Endothelial cell of umbilical vein (primary cell): ENCODE measurements at regions of chr5 and their contacts with region 1.

Region 1: DNA sequence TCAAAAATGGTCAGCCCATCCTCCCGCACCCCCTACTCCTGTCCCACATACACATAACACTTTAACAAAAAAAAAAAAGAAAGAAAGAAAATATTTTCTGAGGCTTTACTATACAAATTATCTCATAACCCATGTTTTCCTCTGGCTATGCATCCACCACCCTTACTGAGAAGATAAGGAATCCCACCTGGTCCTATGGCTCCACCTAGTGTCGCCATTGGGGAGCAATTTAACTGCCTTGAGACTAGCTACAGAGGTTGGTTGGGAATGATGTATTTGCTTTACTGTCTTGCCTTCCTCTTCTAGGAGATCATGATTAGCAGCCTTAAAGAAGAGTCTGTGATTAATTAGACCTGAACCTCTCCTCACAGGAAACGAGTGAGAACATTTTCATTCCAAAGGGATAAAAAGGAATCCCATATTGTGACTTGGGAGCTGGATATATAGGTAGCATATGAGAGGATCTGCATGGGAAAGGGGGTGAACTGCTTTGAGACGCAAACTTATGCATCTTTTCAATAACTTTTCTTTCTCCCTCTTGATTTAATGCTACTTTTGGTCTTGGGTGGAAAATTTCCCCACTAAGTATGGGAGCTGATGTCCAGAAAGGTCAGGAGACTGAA is 77.7 kb upstream of the SELENOP start:
- DNase-seq: peak; percentile 71
- H3K4me3 ChIP-seq: no peak overlapping the region
- H3K27ac ChIP-seq: no peak overlapping the region
- H3K4me1 ChIP-seq: no peaks in the 10 kb centered on the region
- H3K27me3 ChIP-seq: peaks cover 7 to 22% of the 10 kb centered on the region in 2 experiments
- CTCF ChIP-seq: peak; percentile 71 to 82
- POLR2A ChIP-seq: no peak

Region 2: DNA sequence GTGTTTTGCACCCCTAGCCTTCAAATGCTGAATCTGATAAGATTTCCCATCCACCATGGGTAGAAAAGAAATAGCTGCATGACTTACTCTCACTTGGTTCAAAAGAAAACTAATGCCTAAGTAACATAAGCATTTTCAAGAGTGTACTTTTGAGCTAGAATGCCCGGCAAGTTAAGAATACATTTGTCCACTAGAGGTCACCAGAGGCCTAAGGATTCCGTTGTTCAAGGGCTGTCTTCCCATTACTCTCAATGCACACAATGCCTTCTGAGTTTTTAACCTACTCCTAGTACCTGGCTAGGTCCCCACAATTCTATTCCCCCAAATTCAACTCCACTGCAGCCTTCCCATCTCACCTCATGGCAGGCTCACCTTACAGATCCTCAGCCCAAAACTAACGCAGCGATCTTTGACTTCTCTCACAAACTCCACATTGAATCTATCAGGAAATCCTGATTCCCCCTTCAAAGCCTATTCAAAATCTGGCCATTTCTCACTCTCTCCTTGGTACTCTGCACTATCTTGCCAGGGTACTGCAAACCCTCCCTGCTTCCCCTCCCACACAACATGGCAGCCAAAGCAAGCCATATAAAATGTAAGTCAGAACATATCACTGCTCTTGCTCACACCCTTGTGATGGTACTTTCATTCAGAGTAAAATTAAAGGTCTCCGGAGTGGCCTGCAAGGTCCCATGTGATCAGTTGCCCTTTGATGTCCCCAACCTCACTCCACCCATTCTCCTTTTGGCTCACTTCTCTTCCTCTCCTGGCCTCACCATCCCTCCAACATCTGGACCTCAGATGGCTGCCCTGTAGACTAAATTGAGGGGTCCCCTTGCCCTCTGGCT is 1032.6 kb before region 1 on chr5:
- CTCF ChIA-PET with region 1: interaction called, 24 read pairs
- POLR2A ChIA-PET with region 1: no interaction called
- dilution Hi-C with region 1: no loop called
- intact Hi-C with region 1: loop called (anchors 1 kb)
- DNase-seq: peak; percentile 77
- H3K4me3 ChIP-seq: no peak overlapping the region
- H3K27ac ChIP-seq: no peak overlapping the region
- H3K4me1 ChIP-seq: no peaks in the 10 kb centered on the region
- H3K27me3 ChIP-seq: no peaks in the 10 kb centered on the region
- CTCF ChIP-seq: peak; percentile 61
- POLR2A ChIP-seq: no peak

Region 3: DNA sequence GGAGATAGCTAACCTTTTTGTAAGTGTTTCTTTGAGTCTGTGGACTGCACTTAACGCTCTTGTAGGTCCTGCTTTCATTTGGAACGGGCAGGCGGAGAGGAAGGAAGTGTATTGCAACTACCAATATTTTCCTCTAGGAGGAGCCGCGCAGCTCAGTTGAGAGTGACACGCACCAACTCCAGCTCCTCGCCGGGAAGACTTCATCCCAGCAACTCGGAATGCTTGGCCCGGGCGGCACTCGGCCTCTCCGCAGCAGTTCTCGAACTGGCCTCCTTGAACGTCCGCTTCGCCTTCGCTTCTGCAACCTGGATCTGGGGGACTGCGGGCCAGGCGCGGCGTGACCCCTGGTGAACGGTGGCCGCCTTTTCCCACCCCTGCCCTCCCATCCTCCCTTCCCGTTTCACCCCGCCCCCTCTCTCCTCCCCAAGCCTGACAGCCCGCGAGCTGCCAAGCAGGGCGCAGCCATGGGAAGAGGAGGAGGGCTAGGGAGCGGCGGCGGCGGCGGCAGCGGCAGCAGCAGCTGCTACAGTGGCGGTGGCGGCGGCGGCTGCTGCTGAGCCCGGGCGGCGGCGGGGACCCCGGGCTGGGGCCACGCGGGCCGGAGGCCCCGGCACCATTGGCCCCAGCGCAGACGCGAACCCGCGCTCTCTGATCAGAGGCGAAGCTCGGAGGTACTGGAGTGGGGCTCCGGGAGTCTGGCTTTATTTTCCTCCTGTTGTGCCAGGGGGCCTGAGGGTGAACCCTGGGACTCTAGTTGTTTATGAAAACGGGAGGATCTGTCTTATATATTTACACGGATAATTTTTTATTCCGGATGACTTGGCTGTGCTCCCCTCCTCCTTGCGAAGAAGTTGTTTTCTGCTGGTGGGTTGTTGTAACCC is 465.9 kb before region 1 on chr5 and contains the start of gene GHR:
- CTCF ChIA-PET with region 1: interaction called, 17 read pairs
- POLR2A ChIA-PET with region 1: no interaction called
- dilution Hi-C with region 1: no loop called
- intact Hi-C with region 1: loop called (anchors 1 kb)
- DNase-seq: peak; percentile 89
- H3K4me3 ChIP-seq: peak within 1 kb of the TSS; percentile 8 to 39 (median 18)
- H3K27ac ChIP-seq: no peak within 1 kb of the TSS
- H3K4me1 ChIP-seq: peaks cover 4% of the 10 kb centered on the region
- H3K27me3 ChIP-seq: peaks cover 12% of the 10 kb centered on the region in 2 experiments
- CTCF ChIP-seq: peak; percentile 60 to 74
- POLR2A ChIP-seq: no peak
- total RNA-seq, gene GHR: 0.27 and 0.39 TPM in 2 replicates

Region 4: DNA sequence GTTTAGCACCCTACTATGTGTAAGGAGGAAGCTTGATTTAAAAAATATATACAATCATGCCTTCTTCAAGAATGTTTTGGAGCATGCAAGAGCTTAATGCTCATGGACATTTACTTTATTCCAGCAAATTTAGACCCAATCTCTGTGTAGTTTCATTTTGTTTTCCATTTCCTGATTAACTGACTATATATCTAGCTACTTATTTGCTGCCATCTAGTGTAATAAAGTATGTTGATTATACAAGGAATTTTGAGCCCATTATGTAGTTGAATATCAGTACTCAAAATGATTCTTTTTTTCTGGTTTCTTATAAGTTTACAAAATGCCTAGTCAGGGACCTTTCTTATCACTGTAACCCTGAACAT is 232.8 kb before region 1 on chr5:
- CTCF ChIA-PET with region 1: interaction called, 3 read pairs
- POLR2A ChIA-PET with region 1: no interaction called
- dilution Hi-C with region 1: no loop called
- intact Hi-C with region 1: loop called (anchors 5 kb)
- DNase-seq: peak; percentile 6
- H3K4me3 ChIP-seq: no peak overlapping the region
- H3K27ac ChIP-seq: no peak overlapping the region
- H3K4me1 ChIP-seq: no peaks in the 10 kb centered on the region
- H3K27me3 ChIP-seq: no peaks in the 10 kb centered on the region
- CTCF ChIP-seq: no peak
- POLR2A ChIP-seq: no peak

Region 5: DNA sequence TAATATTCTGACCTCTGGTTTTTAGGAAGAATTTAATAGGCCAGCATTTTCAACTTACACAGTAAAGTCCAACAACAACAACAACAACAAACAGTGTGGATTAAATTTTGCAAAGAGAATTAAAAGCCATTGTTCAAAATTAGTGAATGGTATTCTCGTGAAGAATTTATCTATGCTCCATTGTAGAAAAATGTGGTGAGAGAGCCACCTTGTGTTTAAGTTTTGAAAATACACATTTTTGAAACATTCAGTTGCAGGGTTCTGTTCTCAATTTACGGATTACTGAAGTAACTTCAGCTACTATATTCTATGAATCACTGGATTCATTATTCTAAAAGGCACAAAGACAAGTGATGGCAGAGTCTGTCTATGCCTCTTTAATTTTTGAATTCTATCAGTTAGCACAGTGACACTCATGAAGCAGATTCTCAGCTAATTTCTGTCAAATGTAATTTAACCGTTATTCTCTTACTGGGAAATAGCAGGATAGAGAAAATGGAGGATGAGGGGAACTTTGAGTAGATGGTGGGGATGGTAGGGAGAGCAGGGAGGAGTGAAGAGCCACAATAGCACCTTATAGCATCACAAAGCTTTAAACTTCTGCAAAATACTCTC is 121.8 kb before region 1 on chr5:
- CTCF ChIA-PET with region 1: interaction called, 16 read pairs
- POLR2A ChIA-PET with region 1: no interaction called
- dilution Hi-C with region 1: no loop called
- intact Hi-C with region 1: loop called (anchors 5 kb)
- DNase-seq: peak; percentile 39
- H3K4me3 ChIP-seq: no peak overlapping the region
- H3K27ac ChIP-seq: no peak overlapping the region
- H3K4me1 ChIP-seq: no peaks in the 10 kb centered on the region
- H3K27me3 ChIP-seq: no peaks in the 10 kb centered on the region
- CTCF ChIP-seq: peak; percentile 19 to 20
- POLR2A ChIP-seq: no peak

Region 6: DNA sequence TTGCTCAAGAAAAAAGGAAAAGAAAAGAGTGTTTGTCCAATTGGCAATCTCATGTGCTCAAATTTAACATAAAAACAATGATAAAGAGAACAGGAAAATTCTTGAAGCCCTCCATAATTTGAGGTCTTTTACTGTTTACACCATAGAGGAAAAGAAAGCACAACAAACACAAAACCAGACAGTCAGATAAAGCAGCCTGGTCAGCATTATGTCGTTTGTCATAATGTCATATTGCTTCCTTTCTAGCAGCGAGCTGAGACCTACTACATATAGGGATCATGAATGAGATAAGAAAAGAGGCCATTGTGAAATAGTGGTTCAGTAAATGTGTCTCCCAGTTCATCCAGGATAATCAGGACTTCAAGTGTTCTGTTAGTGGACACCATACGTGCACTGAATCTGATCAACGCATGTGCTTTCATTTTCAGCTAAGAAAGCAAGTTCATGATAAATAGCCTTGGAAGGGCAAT is 13.0 kb before region 1 on chr5:
- CTCF ChIA-PET with region 1: interaction called, 27 read pairs
- POLR2A ChIA-PET with region 1: no interaction called
- dilution Hi-C with region 1: no loop called
- intact Hi-C with region 1: no loop called
- DNase-seq: peak; percentile 52
- H3K4me3 ChIP-seq: no peak overlapping the region
- H3K27ac ChIP-seq: no peak overlapping the region
- H3K4me1 ChIP-seq: peaks cover 11% of the 10 kb centered on the region
- H3K27me3 ChIP-seq: no peaks in the 10 kb centered on the region
- CTCF ChIP-seq: no peak
- POLR2A ChIP-seq: no peak

Region 7: DNA sequence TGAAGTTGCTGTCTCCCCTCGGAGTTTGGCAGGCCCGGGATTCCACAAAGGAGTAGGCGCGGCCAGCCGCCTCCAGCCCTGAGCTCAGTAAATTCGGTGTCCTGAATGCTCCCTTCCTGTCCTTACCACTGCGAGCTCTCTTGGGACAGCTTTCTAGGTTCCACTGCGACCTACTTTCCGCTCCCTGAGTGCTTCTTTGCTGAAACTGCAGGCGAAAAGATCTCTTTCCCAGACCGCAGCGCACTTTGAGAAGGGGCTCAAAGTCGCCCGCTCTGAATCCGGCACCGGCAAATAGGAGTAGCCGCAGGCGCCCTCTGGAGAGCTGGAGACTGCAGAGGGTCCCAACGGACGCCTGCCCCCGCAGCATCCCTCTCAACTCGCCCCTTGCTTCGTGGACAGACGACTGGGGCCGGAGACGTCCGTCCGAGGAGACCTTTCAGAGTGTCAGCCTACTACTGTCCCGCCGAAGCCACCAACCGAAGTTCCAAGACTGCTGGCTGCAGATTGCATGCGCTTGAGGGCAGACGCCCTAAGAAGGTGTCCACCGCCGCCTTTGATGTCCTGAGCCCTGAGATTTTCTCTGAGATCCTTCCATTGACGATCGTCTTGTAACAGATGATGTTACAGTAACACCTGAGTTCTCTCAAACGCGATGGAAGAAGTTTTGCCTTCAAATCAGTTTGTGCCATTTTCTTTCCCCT is 54.7 kb after region 1 on chr5:
- CTCF ChIA-PET with region 1: no interaction called
- POLR2A ChIA-PET with region 1: no interaction called
- dilution Hi-C with region 1: no loop called
- intact Hi-C with region 1: no loop called
- DNase-seq: no peak
- H3K4me3 ChIP-seq: no peak overlapping the region
- H3K27ac ChIP-seq: no peak overlapping the region
- H3K4me1 ChIP-seq: peaks cover 17% of the 10 kb centered on the region
- H3K27me3 ChIP-seq: no peaks in the 10 kb centered on the region
- CTCF ChIP-seq: no peak
- POLR2A ChIP-seq: no peak